ENCODE measurements at regions of chr6 and their contacts with region 1.

Region 1: DNA sequence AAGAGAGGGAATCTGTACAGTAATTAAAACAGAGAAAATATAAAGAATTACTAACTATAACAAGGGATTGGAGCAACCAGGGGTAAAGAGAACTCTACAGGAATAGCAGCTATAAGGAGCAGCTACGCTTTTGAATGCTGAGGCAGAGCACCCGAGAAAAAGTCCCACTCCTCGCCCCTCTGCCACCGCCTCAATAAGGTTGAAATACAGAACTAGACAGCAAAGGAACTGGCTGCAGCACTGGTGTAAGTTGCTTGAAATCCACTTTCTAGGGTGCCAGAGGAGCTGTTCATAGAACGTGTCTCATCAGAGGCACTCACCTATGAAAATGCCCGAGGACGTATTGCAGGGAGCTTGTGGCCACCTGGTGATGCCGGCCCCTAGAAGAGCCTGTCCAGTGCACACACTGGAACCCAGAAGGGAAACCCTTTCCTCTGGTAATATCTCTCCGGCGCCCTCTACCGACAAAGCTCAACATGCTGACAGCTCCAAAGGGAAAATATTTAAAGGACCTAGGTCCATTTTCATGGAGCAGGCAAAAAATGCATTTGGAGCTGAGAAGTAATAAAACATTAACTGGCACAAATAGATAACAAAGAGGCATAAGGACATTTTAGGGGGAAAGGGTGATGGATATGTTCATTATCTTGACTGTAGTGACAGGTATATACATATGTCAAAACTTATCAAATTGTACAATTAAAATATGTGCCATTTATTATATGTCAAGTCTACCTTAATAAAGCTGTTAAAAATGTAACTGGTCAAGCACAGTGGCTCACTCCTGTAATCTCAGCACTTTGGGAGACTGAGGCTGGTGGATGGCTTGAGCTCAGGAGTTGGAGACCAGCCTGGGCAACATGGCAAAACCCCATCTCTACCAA is 137.4 kb upstream of the HDAC2 start:
- DNase-seq: peak; percentile 12
- H3K4me3 ChIP-seq: no peak overlapping the region
- H3K27me3 ChIP-seq: 0 out of 2 replicates have a peak, but pooled peaks cover 3% of the 10 kb centered on the region
- CTCF ChIP-seq: peak; percentile 89

Region 2: DNA sequence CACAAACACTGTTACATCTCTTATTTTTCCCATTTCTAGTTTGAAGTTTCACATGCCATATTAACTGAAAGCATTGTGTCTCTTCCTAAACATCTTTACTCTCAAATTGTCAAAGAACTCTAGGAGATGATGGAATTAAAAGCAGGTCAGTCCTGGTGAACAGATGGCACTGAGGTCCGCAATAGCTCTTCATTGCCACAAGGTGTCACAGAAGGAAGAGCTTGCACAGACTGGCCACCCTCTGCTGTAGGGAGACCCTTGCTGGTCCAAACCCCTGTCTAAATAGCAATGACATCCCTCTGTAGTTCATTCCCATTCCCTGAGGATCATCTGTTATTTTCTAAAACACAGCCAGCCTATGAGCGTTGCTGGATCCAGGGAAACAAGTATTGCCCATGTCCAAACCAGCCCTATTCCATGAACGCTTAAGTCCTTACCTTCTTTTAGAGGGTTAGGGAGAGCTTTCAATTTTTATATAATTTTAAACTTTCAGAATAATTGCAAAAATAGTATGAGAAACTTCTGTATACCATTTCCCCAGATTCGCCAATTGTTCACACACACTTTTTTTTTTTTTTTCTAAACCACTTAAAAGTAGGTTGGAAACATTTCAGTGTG is 127.3 kb before region 1 on chr6:
- CTCF ChIA-PET with region 1: interaction called, 20 read pairs
- POLR2A ChIA-PET with region 1: no interaction called
- DNase-seq: no peak
- H3K4me3 ChIP-seq: no peak overlapping the region
- H3K27me3 ChIP-seq: no peaks in the 10 kb centered on the region; the same call in 1 of the 2 replicates
- CTCF ChIP-seq: peak; percentile 58

Region 3: DNA sequence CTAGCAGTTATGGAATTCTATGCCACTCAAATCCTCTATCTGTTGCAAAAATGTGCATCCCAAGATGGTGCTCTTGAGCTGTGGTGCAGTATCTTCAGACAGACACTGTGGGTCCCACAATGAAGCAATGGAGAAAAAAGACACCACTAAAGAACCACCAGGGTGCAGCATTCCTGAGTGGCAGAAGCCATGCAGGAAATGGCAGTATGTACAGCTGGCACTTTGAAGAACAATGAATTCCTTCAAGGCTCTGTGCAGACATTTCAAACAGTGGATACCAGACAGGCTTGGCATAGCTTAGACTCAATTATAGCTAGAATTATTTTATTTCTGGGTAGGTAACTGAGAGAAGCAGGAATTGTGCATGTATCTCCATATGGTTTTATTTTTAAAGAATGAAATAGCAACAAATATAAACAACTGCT is 113.4 kb before region 1 on chr6:
- CTCF ChIA-PET with region 1: interaction called, 195 read pairs
- POLR2A ChIA-PET with region 1: interaction called, 3 read pairs
- DNase-seq: peak; percentile 54
- H3K4me3 ChIP-seq: no peak overlapping the region
- H3K27me3 ChIP-seq: no peaks in the 10 kb centered on the region
- CTCF ChIP-seq: peak; percentile 87

Region 4: GRCh38 chr6:114000066-114000465 is 108.3 kb before region 1 on chr6:
- CTCF ChIA-PET with region 1: interaction called, 195 read pairs
- POLR2A ChIA-PET with region 1: interaction called, 3 read pairs
- DNase-seq: no peak
- H3K4me3 ChIP-seq: no peak overlapping the region
- H3K27me3 ChIP-seq: no peaks in the 10 kb centered on the region
- CTCF ChIP-seq: no peak

Region 5: GRCh38 chr6:114085211-114085610 is 23.1 kb before region 1 on chr6:
- CTCF ChIA-PET with region 1: interaction called, 15 read pairs
- POLR2A ChIA-PET with region 1: no interaction called
- DNase-seq: peak; percentile 85
- H3K4me3 ChIP-seq: no peak overlapping the region
- H3K27me3 ChIP-seq: no peaks in the 10 kb centered on the region
- CTCF ChIP-seq: no peak

Region 6: DNA sequence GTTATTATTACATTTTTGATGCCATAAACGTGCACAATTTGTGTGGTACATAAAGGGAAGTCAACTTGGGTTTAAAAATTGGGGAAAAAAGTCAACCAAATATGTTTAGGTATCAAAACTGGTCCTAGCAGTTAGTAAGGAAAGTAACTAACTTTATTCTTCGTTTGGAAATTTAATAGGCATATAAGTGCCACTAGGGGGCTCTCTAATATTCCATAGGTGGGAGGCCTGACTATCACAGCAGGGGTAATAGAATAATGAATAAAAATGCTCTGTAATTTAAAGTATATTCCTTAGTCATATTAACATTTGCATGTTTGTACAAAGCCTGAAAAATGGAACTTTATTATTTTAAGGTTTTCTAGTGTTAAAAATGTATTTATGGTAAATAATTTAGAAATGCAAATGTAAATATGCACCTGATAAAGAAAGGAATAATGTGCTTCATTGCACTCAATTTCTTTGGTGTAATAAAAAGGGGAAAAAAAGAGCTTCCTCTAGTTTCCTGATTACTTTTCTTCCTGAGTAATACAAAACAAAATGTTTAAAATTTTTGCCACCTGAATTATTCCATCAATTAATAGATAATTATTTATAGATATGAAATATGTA is 11.7 kb before region 1 on chr6:
- CTCF ChIA-PET with region 1: interaction called, 37 read pairs
- POLR2A ChIA-PET with region 1: no interaction called
- DNase-seq: no peak
- H3K4me3 ChIP-seq: no peak overlapping the region
- H3K27me3 ChIP-seq: no peaks in the 10 kb centered on the region
- CTCF ChIP-seq: peak; percentile 75

Region 7: DNA sequence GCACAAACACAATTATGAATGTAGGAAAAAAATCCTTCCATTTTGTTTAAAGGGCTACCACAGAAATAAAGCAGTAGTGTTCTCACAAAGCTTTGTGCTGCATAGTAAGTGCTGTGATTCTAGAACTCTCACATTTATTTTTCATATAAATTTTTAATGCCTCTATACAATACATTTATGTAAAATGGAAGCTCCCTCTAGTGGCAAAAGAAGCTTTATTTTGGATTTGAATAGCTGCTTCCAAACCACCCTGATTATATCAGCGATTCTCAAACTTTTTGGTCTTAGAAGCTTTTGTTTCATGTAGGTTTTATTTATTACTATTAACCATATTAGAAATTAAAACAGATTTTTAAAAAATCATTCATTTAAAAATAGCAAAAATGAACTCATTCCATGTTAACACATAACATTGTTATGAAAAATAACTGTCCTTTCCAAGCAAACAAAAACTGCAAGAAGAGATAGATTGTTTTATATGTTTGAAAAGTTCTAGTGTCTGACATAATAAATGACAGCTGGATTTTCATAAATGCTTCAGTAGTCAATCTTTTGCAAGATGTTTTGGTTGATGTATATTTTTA is 196.0 kb after region 1 on chr6:
- CTCF ChIA-PET with region 1: interaction called, 19 read pairs
- POLR2A ChIA-PET with region 1: no interaction called
- DNase-seq: no peak
- H3K4me3 ChIP-seq: no peak overlapping the region
- H3K27me3 ChIP-seq: no peaks in the 10 kb centered on the region
- CTCF ChIP-seq: peak; percentile 54

Measured in BJ (cell line).